HCT116 (cell line): ENCODE measurements at regions of chr2 and their contacts with region 1.

Region 1: DNA sequence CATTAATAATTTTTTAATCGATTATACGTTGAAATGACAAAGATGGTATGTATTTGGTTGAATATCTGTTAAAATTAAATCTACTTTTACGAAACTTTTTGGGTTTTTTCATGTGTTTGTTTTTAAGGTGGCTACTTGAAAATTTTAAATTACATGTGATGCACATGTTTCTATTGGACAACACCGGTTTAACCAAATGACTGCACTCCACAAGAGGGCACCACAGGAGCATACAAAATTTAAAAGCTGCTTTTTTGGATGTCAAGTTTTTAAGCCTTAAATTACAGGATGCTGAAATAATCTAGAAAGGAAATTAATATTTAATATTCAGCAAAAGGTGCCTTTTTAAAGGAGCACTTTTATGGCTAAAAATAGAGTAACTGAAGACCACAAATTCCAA is 98.7 kb downstream of the ACVR1 start:
- DNase-seq: peak; percentile 28
- ATAC-seq: 0 out of 2 replicates have a peak, but pooled peaks have one; percentile 40
- H3K4me3 ChIP-seq: no peak overlapping the region
- H3K27ac ChIP-seq: no peak overlapping the region
- H3K4me1 ChIP-seq: no peaks in the 10 kb centered on the region
- H3K27me3 ChIP-seq: no peaks in the 10 kb centered on the region
- CTCF ChIP-seq: peak; percentile 60 to 79 (median 72); a peak in 5 of 6 replicates
- POLR2A ChIP-seq: no peak
- RAD21 ChIP-seq: peak; percentile 85

Region 2: GRCh38 chr2:157492189-157492773 is 285.1 kb before region 1 on chr2:
- CTCF ChIA-PET with region 1: interaction called, 3 read pairs
- POLR2A ChIA-PET with region 1: no interaction called
- RAD21 ChIA-PET with region 1: no interaction called
- intact Hi-C with region 1: loop called (anchors 5 kb)
- DNase-seq: peak; percentile 49
- ATAC-seq: peak; percentile 93
- H3K4me3 ChIP-seq: no peak overlapping the region
- H3K27ac ChIP-seq: no peak overlapping the region
- H3K4me1 ChIP-seq: peaks cover 0 to 5% of the 10 kb centered on the region in 2 experiments; a peak in 1 of 4 replicates
- H3K27me3 ChIP-seq: no peaks in the 10 kb centered on the region
- CTCF ChIP-seq: peak; percentile 69 to 89 (median 69); a peak in 5 of 6 replicates
- POLR2A ChIP-seq: no peak
- RAD21 ChIP-seq: peak; percentile 85

Region 3: DNA sequence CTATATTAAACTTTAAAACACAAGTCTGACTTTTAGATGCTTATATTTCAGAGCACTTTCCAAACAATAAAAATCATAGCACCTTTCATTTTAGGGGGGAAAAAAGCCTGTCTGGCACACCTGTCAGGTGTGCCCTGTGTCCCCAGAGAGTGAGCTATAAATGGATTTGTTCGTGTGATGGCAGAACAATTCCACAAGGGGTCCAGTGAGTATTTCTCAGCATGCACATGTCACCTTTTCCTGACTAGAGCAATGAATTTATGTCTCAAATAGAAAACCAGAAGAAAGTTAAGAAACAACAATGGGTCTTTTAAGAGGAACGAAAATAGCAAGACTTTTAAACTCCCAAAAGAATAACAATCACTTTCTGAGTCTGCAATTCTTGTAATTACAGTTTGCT is 204.7 kb before region 1 on chr2:
- CTCF ChIA-PET with region 1: no interaction called
- POLR2A ChIA-PET with region 1: no interaction called
- RAD21 ChIA-PET with region 1: no interaction called
- intact Hi-C with region 1: loop called (anchors 10 kb)
- DNase-seq: peak; percentile 13
- ATAC-seq: peak; percentile 87
- H3K4me3 ChIP-seq: no peak overlapping the region
- H3K27ac ChIP-seq: no peak overlapping the region
- H3K4me1 ChIP-seq: no peaks in the 10 kb centered on the region
- H3K27me3 ChIP-seq: no peaks in the 10 kb centered on the region
- CTCF ChIP-seq: peak; percentile 19 to 60 (median 59); a peak in 5 of 6 replicates
- POLR2A ChIP-seq: no peak
- RAD21 ChIP-seq: peak; percentile 45

Region 4: GRCh38 chr2:157876066-157876787 is 98.8 kb after region 1 on chr2 and contains the start of gene ACVR1:
- CTCF ChIA-PET with region 1: no interaction called
- POLR2A ChIA-PET with region 1: no interaction called
- RAD21 ChIA-PET with region 1: no interaction called
- intact Hi-C with region 1: loop called (anchors 5 kb)
- DNase-seq: peak; percentile 90
- ATAC-seq: peak; percentile 91
- H3K4me3 ChIP-seq: peak within 1 kb of the TSS; percentile 68 to 76
- H3K27ac ChIP-seq: peak within 1 kb of the TSS; percentile 79
- H3K4me1 ChIP-seq: peaks cover 6 to 25% of the 10 kb centered on the region in 2 experiments; a peak in 3 of 4 replicates
- H3K27me3 ChIP-seq: no peaks in the 10 kb centered on the region
- CTCF ChIP-seq: peak in 1 of 3 experiments; percentile 20; a peak in 1 of 6 replicates
- POLR2A ChIP-seq: peak; percentile 26
- RAD21 ChIP-seq: no peak
- total RNA-seq, gene ACVR1: 16.9 TPM